Astrocyte of the cerebellum (primary cell): ENCODE measurements at regions of chr12 and their contacts with region 1.

Region 1: GRCh38 chr12:23204933-23205778 is 580.2 kb downstream of the ETNK1 start:
- DNase-seq: peak; percentile 66
- H3K4me3 ChIP-seq: no peak overlapping the region
- CTCF ChIP-seq: peak; percentile 87

Region 2: GRCh38 chr12:22709292-22709691 is 495.9 kb before region 1 on chr12:
- in situ Hi-C with region 1: loop called (anchors 25 kb)
- DNase-seq: peak; percentile 29
- H3K4me3 ChIP-seq: no peak overlapping the region
- CTCF ChIP-seq: peak; percentile 46

Region 3: GRCh38 chr12:23099604-23100003 is 105.6 kb before region 1 on chr12:
- in situ Hi-C with region 1: loop called (anchors 25 kb)
- DNase-seq: no peak
- H3K4me3 ChIP-seq: no peak overlapping the region
- CTCF ChIP-seq: no peak

Region 4: GRCh38 chr12:23277831-23278230 is 72.7 kb after region 1 on chr12:
- in situ Hi-C with region 1: no loop called
- DNase-seq: no peak
- H3K4me3 ChIP-seq: no peak overlapping the region
- CTCF ChIP-seq: no peak